ENCODE measurements at regions of chr7 and their contacts with region 1.

Region 1: GRCh38 chr7:30851651-30852307 is 59.9 kb upstream of the AQP1 start:
- DNase-seq: peak; percentile 82 to 87
- ATAC-seq: peak; percentile 77
- H3K4me3 ChIP-seq: no peak overlapping the region
- H3K27ac ChIP-seq: peak overlapping the region; percentile 95
- H3K4me1 ChIP-seq: no peaks in the 10 kb centered on the region
- H3K27me3 ChIP-seq: no peaks in the 10 kb centered on the region

Region 2: DNA sequence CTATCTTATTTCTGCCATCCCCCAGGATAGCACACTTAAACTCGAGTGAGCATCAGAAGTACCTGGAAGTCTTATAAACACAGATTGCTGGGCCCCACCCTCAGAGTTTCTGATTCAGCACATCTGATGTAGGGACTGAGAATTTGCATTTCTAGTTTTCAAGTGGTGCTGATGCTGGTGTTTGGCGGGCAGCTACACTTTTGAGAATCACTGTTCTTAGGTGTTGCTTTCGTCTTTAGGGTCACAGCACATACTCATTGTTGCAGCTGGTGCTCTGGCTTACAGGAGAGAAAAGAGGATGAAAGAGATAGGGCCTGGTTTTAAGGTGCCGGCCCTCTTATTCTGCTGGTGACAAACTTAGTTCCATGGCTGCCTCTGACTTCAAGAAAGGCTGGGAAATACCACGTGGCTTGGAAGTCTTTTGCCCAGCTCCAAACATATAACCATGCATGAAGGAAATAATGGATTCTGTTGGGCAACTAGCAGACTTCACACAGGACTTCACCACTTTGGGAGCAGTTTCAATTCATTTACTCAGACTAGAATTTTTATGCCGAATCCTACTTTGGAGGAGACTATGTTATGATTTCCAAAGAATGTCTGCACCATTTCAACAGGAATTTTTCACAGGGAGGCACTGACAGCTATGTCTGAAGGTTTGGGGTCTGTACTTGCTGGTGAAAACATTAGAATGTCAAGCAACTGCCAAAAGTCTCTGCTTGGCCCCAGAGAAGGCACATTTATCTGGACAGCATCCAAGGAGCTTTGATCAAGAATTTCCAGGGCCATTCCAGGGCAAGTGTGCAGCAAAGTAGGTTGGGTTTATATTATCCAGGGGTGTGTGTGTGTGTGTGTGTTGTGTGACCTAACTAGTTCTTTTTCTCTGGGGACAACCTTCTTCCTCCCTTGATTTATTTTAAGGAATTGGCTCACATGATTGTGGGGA is 87.5 kb before region 1 on chr7:
- intact Hi-C with region 1: loop called in 1 of 2 experiments (anchors 5 kb)
- DNase-seq: no peak
- ATAC-seq: peak; percentile 59
- H3K4me3 ChIP-seq: no peak overlapping the region
- H3K27ac ChIP-seq: peak overlapping the region; percentile 36 to 98
- H3K4me1 ChIP-seq: peaks cover 8 to 14% of the 10 kb centered on the region in 2 donors
- H3K27me3 ChIP-seq: no peaks in the 10 kb centered on the region

Region 3: DNA sequence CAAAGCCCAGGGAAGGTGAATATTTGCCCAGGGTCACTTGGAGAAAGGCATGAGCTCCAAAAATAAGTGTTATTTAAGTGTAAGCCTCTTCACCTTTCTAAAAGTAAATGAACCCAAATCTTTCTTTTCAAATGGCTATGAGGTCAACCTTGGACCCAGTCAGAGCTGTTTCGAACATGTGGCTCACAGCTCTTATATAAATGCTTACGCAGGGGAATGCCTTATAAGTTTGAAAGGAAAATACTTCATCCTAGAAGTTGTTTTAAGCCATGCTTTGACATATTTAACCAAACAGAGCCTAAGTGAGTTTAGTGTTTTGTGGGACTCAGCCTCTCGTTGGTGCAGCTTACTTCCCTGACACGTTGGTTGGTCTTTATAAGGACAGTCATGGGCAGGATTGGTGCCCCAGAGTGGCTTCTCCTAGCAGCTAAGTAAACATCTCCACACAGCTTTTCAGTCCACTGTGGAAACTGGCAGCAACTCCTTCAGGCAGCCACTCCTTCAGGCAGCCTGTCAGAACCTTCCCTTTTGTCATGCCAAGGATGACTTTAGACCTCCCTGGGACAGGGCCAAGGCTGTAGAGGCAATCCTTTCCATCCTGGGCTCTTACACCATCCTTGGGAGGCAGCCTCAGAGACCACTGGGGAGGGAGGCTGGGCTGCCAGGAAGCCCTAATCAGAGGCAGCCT is 36.9 kb before region 1 on chr7:
- intact Hi-C with region 1: loop called (anchors 5 kb)
- DNase-seq: peak; percentile 84 to 86
- ATAC-seq: peak; percentile 72
- H3K4me3 ChIP-seq: no peak overlapping the region
- H3K27ac ChIP-seq: peak overlapping the region; percentile 89 to 93
- H3K4me1 ChIP-seq: peaks cover 14 to 16% of the 10 kb centered on the region in 2 donors
- H3K27me3 ChIP-seq: no peaks in the 10 kb centered on the region

Region 4: GRCh38 chr7:30941582-30942309 is 90.0 kb after region 1 on chr7:
- intact Hi-C with region 1: no loop called
- DNase-seq: no peak
- ATAC-seq: no peak
- H3K4me3 ChIP-seq: no peak overlapping the region
- H3K27ac ChIP-seq: no peak overlapping the region
- H3K4me1 ChIP-seq: no peaks in the 10 kb centered on the region
- H3K27me3 ChIP-seq: no peaks in the 10 kb centered on the region

Measured in aorta (tissue), 5 donors.